ENCODE measurements at regions of chr7 and their contacts with region 1.

Region 1: GRCh38 chr7:97499204-97499603 is 232.7 kb upstream of the TAC1 start:
- DNase-seq: peak; percentile 41
- H3K4me3 Mint-ChIP-seq: no peak overlapping the region
- H3K27ac Mint-ChIP-seq: no peak overlapping the region
- H3K4me1 Mint-ChIP-seq: no peaks in the 10 kb centered on the region
- H3K27me3 Mint-ChIP-seq: peaks cover 5% of the 10 kb centered on the region

Region 2: DNA sequence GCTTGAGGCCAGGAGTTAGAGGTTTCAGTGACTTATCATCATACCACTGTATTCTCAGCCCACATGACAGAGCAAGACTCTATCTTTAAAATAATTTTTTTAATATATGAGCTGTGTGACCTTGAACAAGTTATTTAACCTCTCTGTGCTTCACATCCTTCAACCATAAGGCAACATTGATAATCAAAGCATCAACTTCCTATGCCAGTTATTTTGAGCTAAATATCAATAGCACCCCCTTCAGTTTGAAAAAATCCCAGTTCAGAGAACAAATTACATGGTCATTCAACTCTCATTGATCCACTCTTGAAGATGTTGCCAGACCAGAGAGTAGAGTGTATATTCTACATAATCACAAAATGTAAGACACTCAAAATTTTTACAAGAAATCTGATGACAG is 320.0 kb after region 1 on chr7:
- CTCF ChIA-PET with region 1: no interaction called
- intact Hi-C with region 1: loop called (anchors 5 kb)
- DNase-seq: no peak
- H3K4me3 Mint-ChIP-seq: no peak overlapping the region
- H3K27ac Mint-ChIP-seq: no peak overlapping the region
- H3K4me1 Mint-ChIP-seq: no peaks in the 10 kb centered on the region
- H3K27me3 Mint-ChIP-seq: no peaks in the 10 kb centered on the region

Measured in activated naive CD4-positive, alpha-beta T cell treated with anti-CD3 and anti-CD28 coated beads for 36 hours (primary cell).